ENCODE measurements at regions of chr22 and their contacts with region 1.

Region 1: GRCh38 chr22:36252754-36253517 is at the start of gene APOL1:
- DNase-seq: peak; percentile 74
- H3K4me3 Mint-ChIP-seq: peak within 1 kb of the TSS; percentile 94
- H3K27ac Mint-ChIP-seq: peak within 1 kb of the TSS; percentile 71
- H3K4me1 Mint-ChIP-seq: peaks cover 88% of the 10 kb centered on the region
- H3K27me3 Mint-ChIP-seq: no peaks in the 10 kb centered on the region
- CTCF ChIP-seq: no peak
- total RNA-seq, gene APOL1: 313 and 501 TPM in 2 replicates

Region 2: DNA sequence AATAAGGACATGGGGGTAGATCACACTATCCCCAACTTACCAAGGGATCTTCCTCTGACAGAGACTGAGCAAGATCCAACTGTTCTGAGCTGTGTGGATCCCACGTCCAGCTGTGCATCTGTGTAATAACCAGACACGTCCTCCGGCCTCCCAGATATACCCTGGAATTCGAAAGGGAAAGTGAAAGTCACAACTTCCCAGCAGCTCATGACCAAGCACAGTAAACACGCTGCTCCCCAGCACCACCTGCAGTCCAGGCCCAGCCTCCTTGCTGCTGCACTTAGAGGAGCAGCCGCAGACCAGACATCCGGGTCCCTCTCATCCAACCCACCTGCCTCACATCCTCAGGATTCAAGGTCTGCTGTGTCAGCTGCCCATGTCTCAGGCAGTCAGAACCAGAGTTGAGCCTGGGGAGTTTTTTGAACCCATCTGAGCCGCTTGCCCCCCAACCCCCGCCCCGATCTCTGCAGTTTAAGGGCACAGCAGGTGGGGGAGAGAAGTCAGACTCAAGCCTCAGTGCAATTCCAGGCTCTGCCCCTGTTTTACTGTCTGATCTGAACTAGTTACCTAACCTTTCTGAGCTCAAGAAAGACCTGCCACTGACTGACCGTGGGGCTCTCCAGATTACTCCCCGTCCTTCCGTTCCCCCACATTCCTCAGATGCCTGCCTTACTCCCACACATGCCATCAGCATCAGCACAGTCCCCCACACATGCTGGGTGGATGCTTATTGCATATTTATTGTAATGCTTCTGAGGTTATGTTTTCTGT is 13.3 kb before region 1 on chr22 and contains the start of gene APOL2:
- CTCF ChIA-PET with region 1: interaction called, 63 read pairs
- intact Hi-C with region 1: loop called (anchors 2 kb)
- DNase-seq: peak; percentile 92
- H3K4me3 Mint-ChIP-seq: peak within 1 kb of the TSS; percentile 97
- H3K27ac Mint-ChIP-seq: peak within 1 kb of the TSS; percentile 95
- H3K4me1 Mint-ChIP-seq: peaks cover 66% of the 10 kb centered on the region
- H3K27me3 Mint-ChIP-seq: no peaks in the 10 kb centered on the region
- CTCF ChIP-seq: peak; percentile 67
- total RNA-seq, gene APOL2: 90.1 and 154 TPM in 2 replicates

Region 3: GRCh38 chr22:36331306-36331911 is 78.5 kb after region 1 on chr22:
- CTCF ChIA-PET with region 1: no interaction called
- intact Hi-C with region 1: no loop called
- DNase-seq: peak; percentile 91
- H3K4me3 Mint-ChIP-seq: peak overlapping the region; percentile 68
- H3K27ac Mint-ChIP-seq: peak overlapping the region; percentile 100
- H3K4me1 Mint-ChIP-seq: peaks cover 80% of the 10 kb centered on the region
- H3K27me3 Mint-ChIP-seq: no peaks in the 10 kb centered on the region
- CTCF ChIP-seq: peak; percentile 23

Region 4: DNA sequence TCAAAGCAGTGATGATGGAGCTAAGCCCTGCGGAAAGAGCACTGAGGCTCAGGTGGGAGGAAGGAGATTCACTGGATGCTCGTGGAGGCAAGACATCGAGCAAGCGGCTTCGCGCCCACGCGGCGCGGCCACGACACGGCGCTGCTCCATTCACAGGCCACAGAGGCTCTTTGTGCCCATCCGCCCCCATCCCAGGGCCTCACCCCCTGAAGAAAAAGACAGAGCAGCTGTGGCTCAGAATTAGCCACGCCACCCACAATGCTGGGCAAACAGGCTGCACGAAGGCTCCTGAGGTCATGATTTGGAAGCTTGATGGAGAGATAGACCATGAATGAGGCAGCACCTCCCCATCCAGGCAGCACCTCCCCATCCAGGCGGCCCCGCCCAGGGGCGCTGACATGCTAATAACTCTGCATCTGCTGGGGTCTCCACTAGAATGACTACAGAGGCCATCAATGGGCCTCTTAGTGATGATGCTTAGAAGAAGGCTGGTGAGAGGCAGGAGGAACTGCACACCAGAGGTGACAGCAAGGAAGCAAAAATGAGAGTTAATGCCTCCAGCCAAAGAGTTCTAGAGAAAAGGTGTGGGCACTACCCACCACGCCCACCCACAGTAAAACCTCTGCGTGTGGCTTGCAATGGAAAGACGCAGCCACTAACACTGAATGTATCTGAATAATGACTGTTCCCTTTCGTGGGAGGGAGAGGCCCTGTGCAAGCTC is 91.3 kb after region 1 on chr22:
- CTCF ChIA-PET with region 1: interaction called, 11 read pairs
- intact Hi-C with region 1: no loop called
- DNase-seq: no peak
- H3K4me3 Mint-ChIP-seq: no peak overlapping the region
- H3K27ac Mint-ChIP-seq: peak overlapping the region; percentile 76
- H3K4me1 Mint-ChIP-seq: peaks cover 48% of the 10 kb centered on the region
- H3K27me3 Mint-ChIP-seq: no peaks in the 10 kb centered on the region
- CTCF ChIP-seq: no peak